Sigmoid colon (tissue), 7 donors: ENCODE measurements at regions of chr22 and their contacts with region 1.

Region 1: DNA sequence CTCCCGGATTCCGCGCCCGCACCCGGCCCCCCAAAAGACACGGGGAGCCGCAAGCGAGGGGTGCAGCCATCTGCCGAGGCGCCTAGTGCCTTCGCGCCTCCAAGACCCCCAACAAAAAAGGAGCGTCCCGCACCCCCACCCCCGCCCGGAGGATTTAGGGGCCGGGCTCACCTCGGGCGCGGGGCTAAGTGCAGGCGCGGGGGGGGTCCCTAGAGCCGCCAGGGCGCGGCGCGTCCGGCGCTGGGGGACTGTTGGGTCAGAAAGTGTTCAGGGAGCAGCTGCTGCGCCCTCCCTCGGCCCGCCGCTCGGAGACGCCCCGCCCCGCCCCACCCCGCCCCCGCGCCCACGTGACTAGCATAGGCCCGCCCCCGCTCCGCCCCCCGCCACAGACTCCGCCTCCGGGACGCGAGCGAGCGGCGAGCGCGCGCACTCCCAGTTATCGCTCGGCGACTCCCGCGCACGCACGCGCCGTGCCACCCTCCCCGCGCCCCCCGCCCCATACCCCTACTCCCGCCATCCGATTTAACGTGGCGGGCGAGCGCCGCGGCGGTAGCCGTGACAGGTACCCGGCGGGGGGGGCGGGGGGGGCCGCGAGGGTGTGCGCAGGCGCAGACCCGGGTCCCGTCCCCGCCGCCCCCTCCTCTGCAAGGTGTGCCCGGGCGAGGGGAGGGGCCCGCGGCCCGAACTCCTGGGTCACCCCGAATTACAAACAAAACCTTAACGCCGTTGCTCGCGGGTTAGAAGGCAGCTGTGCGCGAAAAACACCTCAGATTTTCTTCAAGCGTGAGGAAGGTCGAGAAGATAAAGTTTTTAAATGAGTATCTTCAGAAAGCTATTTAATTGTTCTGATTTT is 56.2 kb downstream of the KCNJ4 start:
- DNase-seq: peak; percentile 91
- H3K4me3 ChIP-seq: peak overlapping the region; percentile 59 to 95 (median 83)
- H3K27ac ChIP-seq: peak overlapping the region; percentile 91 to 96 (median 92)
- H3K4me1 ChIP-seq: peaks cover 0 to 25% (median 16%) of the 10 kb centered on the region in 4 donors
- H3K27me3 ChIP-seq: no peaks in the 10 kb centered on the region
- CTCF ChIP-seq: no peak
- EP300 ChIP-seq: no peak
- POLR2A ChIP-seq: peak; percentile 74 to 76

Region 2: DNA sequence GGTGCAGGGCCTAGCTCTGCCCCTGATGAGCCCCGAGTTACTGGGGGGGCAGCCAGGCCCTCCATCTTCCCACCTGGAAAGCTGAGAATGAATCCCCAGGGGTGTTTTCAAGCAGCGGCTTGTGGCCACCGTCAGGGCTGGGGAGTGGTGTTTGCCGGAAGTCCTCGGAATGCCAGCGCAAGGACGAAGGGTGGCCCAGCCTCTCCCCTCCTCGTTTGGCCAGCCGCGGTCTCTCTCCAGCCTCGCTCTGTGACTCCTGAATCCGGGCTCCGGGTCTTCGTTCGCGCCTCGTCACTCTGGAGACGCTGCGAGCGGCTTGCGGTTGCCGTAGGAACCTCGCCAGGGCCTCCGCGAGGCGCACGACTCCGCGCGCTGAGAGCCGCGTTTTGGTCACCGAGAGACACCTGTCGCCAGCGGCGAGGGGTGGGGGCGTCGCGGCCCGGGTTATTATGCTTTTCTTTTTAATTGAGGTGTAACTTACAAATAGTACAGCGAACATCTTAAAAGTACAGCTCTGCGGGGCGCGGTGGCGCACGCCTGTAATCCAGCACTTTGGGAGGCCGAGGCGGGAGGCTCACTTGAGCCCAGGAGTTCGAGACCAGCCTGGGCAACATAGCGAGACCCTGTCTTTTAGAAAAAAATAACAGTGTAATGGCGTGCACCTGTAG is 62.7 kb after region 1 on chr22:
- intact Hi-C with region 1: loop called (anchors 5 kb)
- DNase-seq: peak; percentile 85
- H3K4me3 ChIP-seq: peak overlapping the region in 2 of 4 donors; percentile 11 to 27
- H3K27ac ChIP-seq: no peak overlapping the region
- H3K4me1 ChIP-seq: peaks cover 0 to 12% (median 10%) of the 10 kb centered on the region in 4 donors
- H3K27me3 ChIP-seq: peaks cover 0 to 65% (median 15%) of the 10 kb centered on the region in 3 donors
- CTCF ChIP-seq: no peak
- EP300 ChIP-seq: no peak
- POLR2A ChIP-seq: no peak

Region 3: DNA sequence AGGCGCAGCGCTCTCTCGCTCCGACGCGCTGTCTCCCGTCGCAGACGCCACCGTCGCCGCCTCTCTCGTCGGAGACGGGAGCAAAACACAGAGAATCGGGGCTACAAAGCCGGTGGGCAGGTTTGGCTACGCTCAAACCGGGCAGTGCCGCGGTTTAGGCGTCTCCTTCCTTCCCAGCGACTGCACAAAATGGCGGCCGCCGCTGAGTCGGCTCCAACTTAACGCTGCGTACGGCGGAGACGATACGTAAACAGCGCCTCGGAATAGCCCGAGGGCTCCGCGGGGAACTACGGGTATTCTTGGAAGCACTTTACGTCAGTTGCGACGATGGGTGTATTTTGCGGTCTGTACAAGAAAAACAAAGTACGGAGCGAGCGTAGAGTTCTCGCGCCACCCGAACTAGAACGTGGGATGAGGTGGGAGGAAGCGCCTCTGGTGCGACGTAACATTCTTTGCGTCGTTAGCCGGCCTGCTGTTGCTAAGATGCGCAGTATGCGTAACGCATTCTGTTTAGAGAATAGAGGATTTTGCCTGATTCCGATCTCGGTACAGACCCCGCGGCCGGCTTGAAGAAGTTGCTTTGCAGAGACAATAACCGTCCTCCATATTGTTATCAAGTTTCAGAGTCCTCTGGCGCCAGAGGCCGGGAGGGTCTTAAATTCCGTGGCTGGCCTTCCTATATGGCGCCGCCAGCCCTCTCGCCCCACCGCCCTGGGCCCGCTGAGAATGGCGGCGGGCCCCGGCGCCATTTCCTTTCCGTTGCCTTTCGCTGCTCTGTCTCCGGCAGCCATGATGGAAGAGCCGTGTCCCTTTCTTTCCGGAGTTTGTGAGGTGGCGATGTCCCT is 107.5 kb after region 1 on chr22 and contains the start of gene DDX17:
- intact Hi-C with region 1: loop called (anchors 2 kb)
- DNase-seq: peak; percentile 98
- H3K4me3 ChIP-seq: peak within 1 kb of the TSS; percentile 73 to 94 (median 90)
- H3K27ac ChIP-seq: peak within 1 kb of the TSS; percentile 98 to 100 (median 99)
- H3K4me1 ChIP-seq: peaks cover 0 to 46% (median 45%) of the 10 kb centered on the region in 4 donors
- H3K27me3 ChIP-seq: no peaks in the 10 kb centered on the region
- CTCF ChIP-seq: peak in 1 of 4 experiments; percentile 10
- EP300 ChIP-seq: no peak
- POLR2A ChIP-seq: peak; percentile 41 to 64
- total RNA-seq, gene DDX17: 504 to 630 (median 591) TPM